ENCODE measurements at regions of chrX and their contacts with region 1.

Region 1: DNA sequence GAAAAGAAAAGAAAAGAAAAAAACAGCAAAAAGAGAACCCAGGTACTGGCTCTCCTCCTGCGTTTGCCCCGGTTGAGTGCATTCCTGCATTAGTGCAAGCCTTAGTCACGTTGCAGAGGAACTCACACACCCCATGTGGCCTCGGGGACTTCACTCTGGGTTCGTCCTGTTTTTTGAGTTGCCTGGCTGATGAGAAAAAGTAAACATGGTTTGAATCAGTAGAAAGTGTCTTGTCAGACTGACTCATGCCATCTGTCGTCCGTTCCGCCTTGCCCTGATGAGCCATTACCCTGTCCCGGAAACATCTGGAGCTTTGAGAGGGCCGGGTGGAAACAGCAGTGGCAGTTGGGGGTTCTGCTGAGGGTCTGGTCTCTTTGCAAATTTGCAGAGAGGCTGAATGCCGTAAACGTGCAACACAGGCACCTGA is 16.3 kb downstream of the CD99 start:
- DNase-seq: peak; percentile 97
- H3K4me3 ChIP-seq: peak overlapping the region; percentile 54
- H3K27ac ChIP-seq: peak overlapping the region; percentile 95
- H3K4me1 ChIP-seq: peaks cover 69% of the 10 kb centered on the region
- CTCF ChIP-seq: peak; percentile 15; the same call in 1 of the 2 replicates

Region 2: GRCh38 chrX:2632533-2633504 is 74.5 kb before region 1 on chrX:
- CTCF ChIA-PET with region 1: no interaction called
- POLR2A ChIA-PET with region 1: no interaction called
- intact Hi-C with region 1: loop called (anchors 2 kb)
- DNase-seq: peak; percentile 55
- H3K4me3 ChIP-seq: peak overlapping the region; percentile 50
- H3K27ac ChIP-seq: peak overlapping the region; percentile 90
- H3K4me1 ChIP-seq: peaks cover 34% of the 10 kb centered on the region
- CTCF ChIP-seq: no peak

Region 3: GRCh38 chrX:2690856-2691542 is 16.3 kb before region 1 on chrX and contains the start of gene CD99:
- CTCF ChIA-PET with region 1: no interaction called
- POLR2A ChIA-PET with region 1: no interaction called
- intact Hi-C with region 1: loop called (anchors 2 kb)
- DNase-seq: peak; percentile 85
- H3K4me3 ChIP-seq: peak within 1 kb of the TSS; percentile 77
- H3K27ac ChIP-seq: peak within 1 kb of the TSS; percentile 44
- H3K4me1 ChIP-seq: peaks cover 34% of the 10 kb centered on the region
- CTCF ChIP-seq: no peak
- total RNA-seq, gene CD99: 80.7 and 92.3 TPM in 2 replicates